Caco-2 (cell line): ENCODE measurements at regions of chr1 and their contacts with region 1.

Region 1: GRCh38 chr1:27044613-27045151 is 32.0 kb upstream of the TENT5B start:
- DNase-seq: peak; percentile 79 to 85
- H3K4me3 ChIP-seq: no peak overlapping the region
- H3K4me3 Mint-ChIP-seq: no peak overlapping the region
- H3K27ac Mint-ChIP-seq: no peak overlapping the region
- H3K4me1 ChIP-seq: no peaks in the 10 kb centered on the region
- H3K4me1 Mint-ChIP-seq: peaks cover 7% of the 10 kb centered on the region
- H3K27me3 ChIP-seq: no peaks in the 10 kb centered on the region
- H3K27me3 Mint-ChIP-seq: no peaks in the 10 kb centered on the region
- CTCF ChIP-seq: peak; percentile 91 to 93

Region 2: DNA sequence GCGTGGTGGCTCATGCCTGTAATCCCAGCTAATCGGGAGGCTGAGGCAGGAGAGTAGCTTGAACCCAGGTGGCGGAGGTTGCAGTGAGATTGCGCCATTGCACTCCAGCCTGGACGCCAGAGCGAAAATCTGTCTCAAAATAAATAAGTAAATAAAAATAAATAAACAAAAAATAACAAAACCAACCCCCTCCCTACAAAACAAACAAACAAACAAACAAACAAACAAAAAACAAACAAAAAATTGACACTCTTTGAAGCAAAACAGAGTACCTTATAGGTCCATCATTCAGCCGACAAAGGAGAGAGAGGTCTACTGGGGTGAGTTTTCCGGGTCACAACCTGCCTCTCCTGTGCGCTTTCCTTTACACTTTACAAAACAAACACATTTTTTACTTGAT is 79.0 kb before region 1 on chr1:
- CTCF ChIA-PET with region 1: interaction called, 9 read pairs
- POLR2A ChIA-PET with region 1: no interaction called
- intact Hi-C with region 1: loop called (anchors 2 kb)
- DNase-seq: no peak
- H3K4me3 ChIP-seq: no peak overlapping the region
- H3K4me3 Mint-ChIP-seq: no peak overlapping the region
- H3K27ac Mint-ChIP-seq: no peak overlapping the region
- H3K4me1 ChIP-seq: 0 out of 2 replicates have a peak, but pooled peaks cover 2% of the 10 kb centered on the region
- H3K4me1 Mint-ChIP-seq: peaks cover 6% of the 10 kb centered on the region
- H3K27me3 ChIP-seq: no peaks in the 10 kb centered on the region
- H3K27me3 Mint-ChIP-seq: no peaks in the 10 kb centered on the region
- CTCF ChIP-seq: no peak

Region 3: DNA sequence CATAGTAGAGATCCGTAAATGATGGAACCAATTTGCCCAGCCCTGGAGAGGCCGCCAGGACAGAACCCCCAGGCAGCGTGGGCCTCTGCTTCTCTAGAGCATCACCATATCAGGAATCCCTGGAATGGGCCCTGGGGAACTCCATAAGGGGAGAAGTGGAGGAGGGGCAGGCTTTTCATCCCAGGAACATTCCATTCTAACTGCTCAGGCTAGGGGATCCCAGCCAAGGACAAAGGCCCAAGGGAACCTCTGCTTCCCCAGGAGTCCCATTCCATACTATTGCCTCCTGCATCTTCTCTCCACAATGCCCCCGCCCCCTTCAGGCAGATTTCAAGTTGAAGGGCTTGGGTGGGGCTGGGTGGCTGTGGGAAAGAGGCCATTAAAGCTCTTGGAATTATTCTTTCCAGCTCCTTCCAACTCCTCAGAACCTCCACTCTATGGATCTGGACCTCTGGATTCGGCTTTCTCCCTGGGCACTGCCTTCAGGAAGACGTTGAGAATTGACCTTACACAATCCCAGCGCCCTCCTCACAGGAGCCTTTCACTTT is 45.2 kb before region 1 on chr1:
- CTCF ChIA-PET with region 1: interaction called, 7 read pairs
- POLR2A ChIA-PET with region 1: no interaction called
- intact Hi-C with region 1: loop called (anchors 1 kb)
- DNase-seq: peak; percentile 77 to 87
- H3K4me3 ChIP-seq: no peak overlapping the region
- H3K4me3 Mint-ChIP-seq: no peak overlapping the region
- H3K27ac Mint-ChIP-seq: no peak overlapping the region
- H3K4me1 ChIP-seq: peaks cover 73% of the 10 kb centered on the region
- H3K4me1 Mint-ChIP-seq: peaks cover 5% of the 10 kb centered on the region
- H3K27me3 ChIP-seq: no peaks in the 10 kb centered on the region
- H3K27me3 Mint-ChIP-seq: no peaks in the 10 kb centered on the region
- CTCF ChIP-seq: no peak

Region 4: DNA sequence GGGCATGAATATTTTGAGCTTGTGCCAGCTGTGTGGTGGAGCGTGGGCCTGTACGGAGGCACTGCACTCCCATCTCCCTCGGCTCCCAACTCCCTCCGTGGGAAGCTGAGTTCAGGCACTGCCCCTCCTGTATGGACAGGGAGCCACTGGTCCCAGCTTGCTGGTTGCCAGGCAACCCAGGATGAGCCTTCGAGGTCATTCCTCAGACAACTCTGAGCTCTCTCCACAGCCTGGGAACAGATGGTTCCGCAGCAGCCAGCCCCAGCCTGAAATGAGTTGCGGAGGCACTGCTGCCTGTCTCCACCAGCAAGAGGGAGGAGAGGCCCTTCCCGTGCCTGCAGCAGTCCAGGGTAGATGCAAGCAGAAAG is 26.4 kb after region 1 on chr1:
- CTCF ChIA-PET with region 1: interaction called, 16 read pairs
- POLR2A ChIA-PET with region 1: no interaction called
- intact Hi-C with region 1: no loop called
- DNase-seq: no peak
- H3K4me3 ChIP-seq: no peak overlapping the region
- H3K4me3 Mint-ChIP-seq: no peak overlapping the region
- H3K27ac Mint-ChIP-seq: no peak overlapping the region
- H3K4me1 ChIP-seq: no peaks in the 10 kb centered on the region
- H3K4me1 Mint-ChIP-seq: no peaks in the 10 kb centered on the region
- H3K27me3 ChIP-seq: no peaks in the 10 kb centered on the region
- H3K27me3 Mint-ChIP-seq: no peaks in the 10 kb centered on the region
- CTCF ChIP-seq: no peak

Region 5: GRCh38 chr1:27097484-27097917 is 52.8 kb after region 1 on chr1:
- CTCF ChIA-PET with region 1: interaction called, 109 read pairs
- POLR2A ChIA-PET with region 1: no interaction called
- intact Hi-C with region 1: loop called (anchors 1 kb)
- DNase-seq: peak; percentile 63 to 83
- H3K4me3 ChIP-seq: no peak overlapping the region
- H3K4me3 Mint-ChIP-seq: no peak overlapping the region
- H3K27ac Mint-ChIP-seq: no peak overlapping the region
- H3K4me1 ChIP-seq: peaks cover 14% of the 10 kb centered on the region
- H3K4me1 Mint-ChIP-seq: peaks cover 13% of the 10 kb centered on the region
- H3K27me3 ChIP-seq: no peaks in the 10 kb centered on the region
- H3K27me3 Mint-ChIP-seq: no peaks in the 10 kb centered on the region
- CTCF ChIP-seq: peak; percentile 84 to 86

Region 6: GRCh38 chr1:27284425-27285273 is 240.0 kb after region 1 on chr1:
- CTCF ChIA-PET with region 1: interaction called, 3 read pairs
- POLR2A ChIA-PET with region 1: no interaction called
- intact Hi-C with region 1: loop called (anchors 1 kb)
- DNase-seq: peak; percentile 80 to 81
- H3K4me3 ChIP-seq: no peak overlapping the region
- H3K4me3 Mint-ChIP-seq: no peak overlapping the region
- H3K27ac Mint-ChIP-seq: no peak overlapping the region
- H3K4me1 ChIP-seq: no peaks in the 10 kb centered on the region
- H3K4me1 Mint-ChIP-seq: peaks cover 7% of the 10 kb centered on the region
- H3K27me3 ChIP-seq: no peaks in the 10 kb centered on the region
- H3K27me3 Mint-ChIP-seq: no peaks in the 10 kb centered on the region
- CTCF ChIP-seq: peak; percentile 69 to 71